Dendritic cell treated with granulocyte-macrophage colony-stimulating factor and Interleukin-4, amounts not matched to agents 40 ng/mL and 50 ng/mL, for 4 days (primary cell): ENCODE measurements at regions of chr17 and their contacts with region 1.

Region 1: DNA sequence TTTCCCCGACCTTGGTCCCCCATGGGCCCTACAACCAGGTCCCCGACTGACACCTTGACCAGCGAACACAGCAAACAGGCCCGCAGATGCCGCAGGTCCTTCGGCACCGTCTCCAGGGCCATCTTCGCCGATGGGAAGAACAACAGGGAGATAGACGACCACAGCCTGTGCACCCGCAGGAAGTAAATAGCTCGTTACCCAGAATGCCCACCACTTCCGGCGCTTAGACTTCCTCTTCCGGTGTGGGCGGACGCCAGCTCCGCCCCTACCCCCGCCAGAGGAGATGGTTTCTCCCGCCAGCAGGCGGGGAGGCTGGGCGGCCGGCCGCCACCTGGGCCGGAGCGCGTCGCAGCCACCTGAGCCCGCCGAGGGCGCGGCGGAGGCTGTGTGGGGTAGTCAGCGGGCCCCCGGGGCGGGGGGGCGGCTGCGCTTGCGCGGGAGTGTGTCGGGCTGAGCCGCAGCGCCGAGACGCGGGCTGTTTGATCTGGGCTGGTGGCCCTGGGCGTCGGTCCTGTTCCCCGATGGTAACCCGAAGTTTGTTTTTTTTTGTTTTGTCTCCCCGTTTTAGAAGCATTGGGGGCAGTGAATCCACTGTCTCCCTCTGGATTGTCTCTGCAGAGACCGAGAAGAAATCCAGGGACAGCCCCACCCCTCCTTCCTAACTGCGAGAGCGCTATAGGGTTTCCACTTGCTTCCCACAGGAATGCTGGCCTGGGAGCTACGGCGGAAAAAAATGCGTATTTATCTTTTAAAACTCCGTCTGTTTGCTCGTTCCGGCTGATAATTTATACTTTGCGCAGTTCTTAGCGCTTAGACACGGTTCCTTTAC is at the start of gene SUPT4H1:
- H3K4me3 Mint-ChIP-seq: peak within 1 kb of the TSS; percentile 100
- H3K27ac Mint-ChIP-seq: peak within 1 kb of the TSS; percentile 100
- H3K4me1 Mint-ChIP-seq: peaks cover 55% of the 10 kb centered on the region
- H3K27me3 Mint-ChIP-seq: peaks cover 1% of the 10 kb centered on the region

Region 2: GRCh38 chr17:58279016-58279711 is 73.1 kb before region 1 on chr17:
- intact Hi-C with region 1: loop called (anchors 2 kb)
- H3K4me3 Mint-ChIP-seq: peak overlapping the region; percentile 77
- H3K27ac Mint-ChIP-seq: peak overlapping the region; percentile 78
- H3K4me1 Mint-ChIP-seq: peaks cover 76% of the 10 kb centered on the region
- H3K27me3 Mint-ChIP-seq: peaks cover 24% of the 10 kb centered on the region

Region 3: GRCh38 chr17:58329035-58329809 is 23.0 kb before region 1 on chr17:
- intact Hi-C with region 1: loop called (anchors 1 kb)
- H3K4me3 Mint-ChIP-seq: peak overlapping the region; percentile 58
- H3K27ac Mint-ChIP-seq: peak overlapping the region; percentile 100
- H3K4me1 Mint-ChIP-seq: peaks cover 71% of the 10 kb centered on the region
- H3K27me3 Mint-ChIP-seq: peaks cover 22% of the 10 kb centered on the region

Region 4: DNA sequence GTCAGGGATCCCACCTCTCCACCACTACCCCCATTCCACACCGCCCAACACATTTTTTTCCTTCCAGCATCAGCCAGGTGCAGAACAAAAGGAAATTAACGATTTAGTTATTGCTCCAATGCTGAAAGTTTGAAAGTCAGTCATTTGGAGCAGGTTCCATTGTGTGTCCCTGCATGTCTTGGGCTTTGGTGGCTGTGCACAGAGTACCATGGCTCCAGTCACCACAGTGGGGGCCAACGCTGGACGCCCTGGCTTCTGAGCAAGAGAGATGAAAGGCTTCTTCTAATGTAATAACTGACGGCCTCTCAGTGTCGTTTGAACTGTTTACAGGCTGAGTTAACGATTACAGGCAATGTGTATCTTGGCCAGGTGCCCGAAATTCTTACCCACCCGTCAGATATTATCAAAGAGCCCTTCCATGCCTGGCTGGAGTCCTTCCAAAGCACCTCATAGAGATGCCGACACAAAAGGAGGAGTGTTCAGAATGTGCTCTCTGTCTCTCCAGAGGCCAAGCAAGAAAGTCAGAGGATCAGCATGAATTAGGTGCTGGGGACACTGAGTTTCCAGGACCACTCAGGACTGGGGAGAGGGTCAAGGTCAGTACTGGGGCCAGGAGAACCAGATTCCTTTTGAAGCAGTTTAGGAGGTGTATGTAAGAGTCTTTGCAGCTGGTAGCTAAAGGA is 39.2 kb after region 1 on chr17:
- intact Hi-C with region 1: no loop called
- H3K4me3 Mint-ChIP-seq: no peak overlapping the region
- H3K27ac Mint-ChIP-seq: no peak overlapping the region
- H3K4me1 Mint-ChIP-seq: peaks cover 6% of the 10 kb centered on the region
- H3K27me3 Mint-ChIP-seq: peaks cover 32% of the 10 kb centered on the region

Region 5: GRCh38 chr17:58417300-58418092 is 65.3 kb after region 1 on chr17 and contains the start of gene RNF43:
- intact Hi-C with region 1: loop called (anchors 10 kb)
- H3K4me3 Mint-ChIP-seq: peak within 1 kb of the TSS; percentile 54
- H3K27ac Mint-ChIP-seq: peak within 1 kb of the TSS; percentile 12
- H3K4me1 Mint-ChIP-seq: peaks cover 9% of the 10 kb centered on the region
- H3K27me3 Mint-ChIP-seq: peaks cover 12% of the 10 kb centered on the region